Lower leg skin (tissue), 4 donors: ENCODE measurements at regions of chr2 and their contacts with region 1.

Region 1: GRCh38 chr2:175976391-175977157 is 25.5 kb downstream of the LNPK start:
- DNase-seq: no peak
- H3K4me3 ChIP-seq: no peak overlapping the region
- CTCF ChIP-seq: no peak
- POLR2A ChIP-seq: no peak

Region 2: DNA sequence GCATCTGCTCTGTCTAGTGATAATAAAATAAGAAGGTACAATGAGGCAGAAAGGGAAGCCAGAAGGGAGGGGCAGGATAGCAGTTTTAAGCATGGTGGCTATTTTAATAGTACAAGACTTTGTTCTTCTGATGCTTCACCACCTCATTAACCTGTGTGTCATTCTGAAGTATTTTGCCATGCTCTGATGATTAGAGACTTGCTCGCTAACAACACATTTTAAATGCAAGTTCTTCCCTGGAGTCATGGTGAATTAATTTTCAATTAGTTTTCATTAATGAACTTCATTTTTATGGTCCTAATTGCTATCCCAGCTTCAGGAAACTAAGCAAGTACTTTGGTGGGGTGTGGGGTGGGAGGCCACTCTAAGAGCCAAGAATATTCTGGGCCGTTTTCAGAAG is 51.2 kb after region 1 on chr2:
- intact Hi-C with region 1: loop called (anchors 2 kb)
- DNase-seq: no peak
- H3K4me3 ChIP-seq: no peak overlapping the region
- CTCF ChIP-seq: no peak
- POLR2A ChIP-seq: no peak

Region 3: DNA sequence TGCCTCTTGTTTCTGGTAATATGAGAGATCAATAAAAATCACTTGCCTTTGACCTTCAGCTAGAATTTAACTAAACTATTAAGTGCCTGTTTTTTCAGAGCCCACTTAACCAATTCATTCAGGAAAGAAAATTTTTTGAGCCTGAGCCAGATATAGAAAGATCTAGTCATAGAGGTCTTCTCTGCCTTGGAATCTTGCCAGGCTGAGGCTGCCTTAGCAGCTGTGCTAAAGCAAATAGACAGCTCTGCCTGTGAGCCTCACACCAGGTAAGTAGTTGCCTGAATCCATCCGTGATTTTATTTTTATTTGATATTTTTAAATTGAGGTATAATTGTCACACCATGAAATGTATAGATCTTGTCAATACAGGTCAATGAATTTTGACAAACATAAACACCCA is 79.8 kb after region 1 on chr2:
- intact Hi-C with region 1: no loop called
- DNase-seq: no peak
- H3K4me3 ChIP-seq: no peak overlapping the region
- CTCF ChIP-seq: no peak
- POLR2A ChIP-seq: no peak